K562 (cell line): ENCODE measurements at regions of chr5 and their contacts with region 1.

Region 1: DNA sequence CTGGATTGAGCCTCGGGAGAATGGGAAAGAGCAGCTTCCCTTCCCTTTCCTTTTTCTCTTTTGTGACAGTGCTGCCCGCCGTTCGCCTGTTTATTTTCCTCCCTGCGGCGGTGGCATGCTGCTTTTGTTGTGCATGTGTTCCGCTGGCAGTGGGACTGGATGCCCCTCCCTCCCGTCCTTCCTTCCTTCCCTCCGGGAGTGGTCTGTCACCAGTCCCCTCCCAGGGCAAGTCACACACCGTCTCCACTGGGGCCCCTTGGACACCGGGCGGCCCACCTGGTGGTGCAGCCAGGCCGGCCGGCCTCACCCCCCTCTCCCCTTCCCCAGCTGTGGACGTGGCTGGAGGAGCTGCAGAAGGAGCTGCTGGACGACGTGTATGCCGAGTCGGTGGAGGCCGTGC is 214.7 kb downstream of the TRIO start:
- DNase-seq: no peak
- ATAC-seq: no peak
- H3K4me3 ChIP-seq: no peak overlapping the region
- H3K27ac ChIP-seq: no peak overlapping the region
- H3K4me1 ChIP-seq: peaks cover 0 to 4% of the 10 kb centered on the region in 2 experiments; a peak in 1 of 5 replicates
- H3K27me3 ChIP-seq: peaks cover 26 to 45% of the 10 kb centered on the region in 2 experiments
- CTCF ChIP-seq: no peak
- EP300 ChIP-seq: no peak
- POLR2A ChIP-seq: no peak
- RAD21 ChIP-seq: no peak

Region 2: GRCh38 chr5:14156650-14157493 is 201.0 kb before region 1 on chr5:
- CTCF ChIA-PET with region 1: no interaction called
- POLR2A ChIA-PET with region 1: no interaction called
- in situ Hi-C with region 1: no loop called
- intact Hi-C with region 1: no loop called
- DNase-seq: no peak
- ATAC-seq: no peak
- H3K4me3 ChIP-seq: no peak overlapping the region
- H3K27ac ChIP-seq: no peak overlapping the region
- H3K4me1 ChIP-seq: no peaks in the 10 kb centered on the region; a peak in 1 of 5 replicates
- H3K27me3 ChIP-seq: peaks cover 3 to 27% of the 10 kb centered on the region in 2 experiments; a peak in 4 of 5 replicates
- CTCF ChIP-seq: no peak
- EP300 ChIP-seq: no peak
- POLR2A ChIP-seq: no peak
- RAD21 ChIP-seq: no peak

Region 3: GRCh38 chr5:14218897-14219580 is 138.8 kb before region 1 on chr5:
- CTCF ChIA-PET with region 1: no interaction called
- POLR2A ChIA-PET with region 1: no interaction called
- in situ Hi-C with region 1: no loop called
- intact Hi-C with region 1: no loop called
- DNase-seq: no peak
- ATAC-seq: no peak
- H3K4me3 ChIP-seq: no peak overlapping the region
- H3K27ac ChIP-seq: no peak overlapping the region
- H3K4me1 ChIP-seq: no peaks in the 10 kb centered on the region
- H3K27me3 ChIP-seq: peaks cover 19 to 30% of the 10 kb centered on the region in 2 experiments
- CTCF ChIP-seq: no peak
- EP300 ChIP-seq: no peak
- POLR2A ChIP-seq: no peak
- RAD21 ChIP-seq: no peak

Region 4: GRCh38 chr5:14399054-14399692 is 41.3 kb after region 1 on chr5:
- CTCF ChIA-PET with region 1: no interaction called
- POLR2A ChIA-PET with region 1: no interaction called
- in situ Hi-C with region 1: no loop called
- intact Hi-C with region 1: no loop called
- DNase-seq: peak; percentile 38 to 54 (median 48)
- ATAC-seq: peak; percentile 69; the same call in 2 of the 3 replicates
- H3K4me3 ChIP-seq: no peak overlapping the region
- H3K27ac ChIP-seq: no peak overlapping the region
- H3K4me1 ChIP-seq: no peaks in the 10 kb centered on the region
- H3K27me3 ChIP-seq: peaks cover 0 to 13% of the 10 kb centered on the region in 2 experiments; a peak in 2 of 5 replicates
- CTCF ChIP-seq: peak; percentile 40 to 71 (median 42); a peak in 4 of 6 replicates
- EP300 ChIP-seq: no peak
- POLR2A ChIP-seq: no peak
- RAD21 ChIP-seq: peak; percentile 52 to 68; a peak in 3 of 4 replicates

Region 5: GRCh38 chr5:14650052-14650451 is 292.2 kb after region 1 on chr5:
- CTCF ChIA-PET with region 1: interaction called, 4 read pairs
- POLR2A ChIA-PET with region 1: interaction called, 4 read pairs
- in situ Hi-C with region 1: loop called (anchors 5 kb)
- intact Hi-C with region 1: no loop called
- DNase-seq: no peak
- ATAC-seq: no peak
- H3K4me3 ChIP-seq: no peak overlapping the region
- H3K27ac ChIP-seq: no peak overlapping the region
- H3K4me1 ChIP-seq: no peaks in the 10 kb centered on the region
- H3K27me3 ChIP-seq: peaks cover 0 to 8% of the 10 kb centered on the region in 2 experiments; a peak in 3 of 5 replicates
- CTCF ChIP-seq: no peak
- EP300 ChIP-seq: no peak
- POLR2A ChIP-seq: no peak
- RAD21 ChIP-seq: no peak